A549 (cell line): ENCODE measurements at regions of chr2 and their contacts with region 1.

Region 1: DNA sequence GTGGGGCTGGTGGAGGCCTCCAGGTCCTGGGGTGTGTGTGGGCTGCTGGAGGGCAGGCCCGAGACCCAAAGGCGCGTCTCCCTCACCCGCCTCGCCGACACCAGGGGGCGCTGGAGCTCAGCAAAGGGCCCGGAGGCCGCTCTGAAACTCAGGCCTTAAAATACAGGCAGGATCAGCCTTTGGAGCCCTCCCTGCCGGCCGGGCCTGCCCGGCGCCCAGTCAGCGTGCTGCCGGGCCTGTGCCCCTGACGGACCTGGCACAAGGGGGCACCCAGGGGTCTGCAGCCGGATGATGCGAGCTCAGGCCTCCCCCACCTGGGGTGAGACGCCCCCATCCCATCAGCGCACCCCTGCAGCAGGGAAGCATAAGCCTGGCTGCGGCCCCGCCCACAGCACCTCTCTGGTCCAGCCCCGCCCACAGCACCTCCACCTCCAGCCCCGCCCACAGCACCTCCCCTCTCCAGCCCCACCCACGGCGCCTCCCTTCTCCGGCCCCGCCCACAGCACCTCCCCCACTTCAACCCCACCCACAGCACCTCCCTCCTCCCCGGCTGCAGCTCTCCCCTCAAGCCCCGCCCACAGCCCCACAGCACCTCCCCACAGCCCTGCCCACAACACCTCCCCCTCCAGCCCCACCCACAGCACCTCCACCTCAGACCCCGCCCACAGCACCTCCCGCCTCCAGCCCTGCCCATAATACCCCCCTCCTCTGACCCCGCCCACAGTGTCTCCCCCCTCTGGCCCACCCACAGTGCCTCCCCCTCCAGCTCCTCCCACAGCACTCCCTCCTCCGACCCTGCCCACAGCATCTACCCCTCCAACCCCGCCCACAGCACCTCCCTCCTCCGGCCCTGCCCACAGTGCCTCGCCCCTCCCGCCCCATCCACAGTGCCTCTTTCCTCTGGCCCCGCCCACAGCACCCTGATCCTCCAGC is 92.8 kb upstream of the OTOS start:
- DNase-seq: peak; percentile 90 to 95
- ATAC-seq: peak; percentile 80 to 90
- H3K4me3 ChIP-seq: peak overlapping the region; percentile 59
- H3K27ac ChIP-seq: peak overlapping the region; percentile 83 to 88
- H3K4me1 ChIP-seq: peaks cover 16% of the 10 kb centered on the region
- CTCF ChIP-seq: peak; percentile 88
- EP300 ChIP-seq: no peak
- POLR2A ChIP-seq: no peak
- RAD21 ChIP-seq: peak; percentile 94 to 98

Region 2: GRCh38 chr2:239889641-239890121 is 343.5 kb before region 1 on chr2:
- CTCF ChIA-PET with region 1: no interaction called
- POLR2A ChIA-PET with region 1: no interaction called
- DNase-seq: no peak
- ATAC-seq: no peak
- H3K4me3 ChIP-seq: no peak overlapping the region
- H3K27ac ChIP-seq: no peak overlapping the region
- H3K4me1 ChIP-seq: no peaks in the 10 kb centered on the region
- CTCF ChIP-seq: no peak
- EP300 ChIP-seq: no peak
- POLR2A ChIP-seq: no peak
- RAD21 ChIP-seq: no peak

Region 3: DNA sequence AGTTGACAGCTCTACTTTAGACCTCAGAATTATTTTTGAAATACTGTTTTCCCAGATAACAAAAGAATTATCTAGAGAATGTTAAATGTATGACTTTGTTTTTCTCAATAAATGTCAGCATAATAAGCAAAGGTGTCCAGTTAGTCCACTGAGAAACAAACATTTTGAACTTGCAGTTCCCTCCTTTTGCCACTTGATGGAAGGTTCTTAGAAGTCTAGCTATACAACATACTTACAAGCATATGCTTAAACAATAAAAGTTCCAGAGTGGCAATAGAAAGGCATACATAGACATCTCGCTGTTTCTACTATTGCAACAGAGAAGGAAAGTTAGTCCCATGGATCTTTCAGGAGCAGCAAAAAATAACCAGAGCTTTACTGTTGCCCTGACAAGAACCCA is 219.9 kb before region 1 on chr2:
- CTCF ChIA-PET with region 1: no interaction called
- POLR2A ChIA-PET with region 1: no interaction called
- DNase-seq: peak in 1 of 2 experiments; percentile 29
- ATAC-seq: peak; percentile 79 to 83
- H3K4me3 ChIP-seq: no peak overlapping the region
- H3K27ac ChIP-seq: no peak overlapping the region
- H3K4me1 ChIP-seq: no peaks in the 10 kb centered on the region
- CTCF ChIP-seq: no peak
- EP300 ChIP-seq: no peak
- POLR2A ChIP-seq: no peak
- RAD21 ChIP-seq: no peak

Region 4: GRCh38 chr2:240186191-240186725 is 47.0 kb before region 1 on chr2:
- CTCF ChIA-PET with region 1: no interaction called
- POLR2A ChIA-PET with region 1: no interaction called
- DNase-seq: no peak
- ATAC-seq: no peak
- H3K4me3 ChIP-seq: no peak overlapping the region
- H3K27ac ChIP-seq: no peak overlapping the region
- H3K4me1 ChIP-seq: no peaks in the 10 kb centered on the region
- CTCF ChIP-seq: no peak
- EP300 ChIP-seq: no peak
- POLR2A ChIP-seq: no peak
- RAD21 ChIP-seq: no peak

Region 5: DNA sequence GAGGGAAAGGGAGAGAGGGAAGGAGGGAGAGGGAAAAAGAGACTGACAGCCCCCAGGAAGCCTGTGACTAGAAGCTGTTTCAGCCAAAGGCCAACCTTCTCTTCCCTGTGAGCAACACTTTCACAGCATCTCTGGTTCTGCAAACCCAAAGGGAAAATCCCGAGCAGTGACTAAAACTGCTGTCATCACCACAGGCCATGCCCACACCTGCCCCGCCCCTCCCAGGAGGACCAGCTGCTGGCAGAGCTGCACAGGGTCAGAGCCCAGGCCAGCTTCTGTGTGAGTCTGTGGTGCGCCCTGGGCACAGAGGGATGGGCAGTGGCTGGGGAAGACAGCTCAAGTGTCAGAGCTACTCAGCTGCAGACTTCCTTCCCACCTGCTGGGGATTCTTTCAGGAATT is 27.9 kb before region 1 on chr2:
- CTCF ChIA-PET with region 1: interaction called, 13 read pairs
- POLR2A ChIA-PET with region 1: no interaction called
- DNase-seq: peak; percentile 45 to 46
- ATAC-seq: peak; percentile 78
- H3K4me3 ChIP-seq: no peak overlapping the region
- H3K27ac ChIP-seq: no peak overlapping the region
- H3K4me1 ChIP-seq: no peaks in the 10 kb centered on the region; the same call in 2 of the 3 replicates
- CTCF ChIP-seq: no peak
- EP300 ChIP-seq: no peak
- POLR2A ChIP-seq: no peak
- RAD21 ChIP-seq: no peak

Region 6: DNA sequence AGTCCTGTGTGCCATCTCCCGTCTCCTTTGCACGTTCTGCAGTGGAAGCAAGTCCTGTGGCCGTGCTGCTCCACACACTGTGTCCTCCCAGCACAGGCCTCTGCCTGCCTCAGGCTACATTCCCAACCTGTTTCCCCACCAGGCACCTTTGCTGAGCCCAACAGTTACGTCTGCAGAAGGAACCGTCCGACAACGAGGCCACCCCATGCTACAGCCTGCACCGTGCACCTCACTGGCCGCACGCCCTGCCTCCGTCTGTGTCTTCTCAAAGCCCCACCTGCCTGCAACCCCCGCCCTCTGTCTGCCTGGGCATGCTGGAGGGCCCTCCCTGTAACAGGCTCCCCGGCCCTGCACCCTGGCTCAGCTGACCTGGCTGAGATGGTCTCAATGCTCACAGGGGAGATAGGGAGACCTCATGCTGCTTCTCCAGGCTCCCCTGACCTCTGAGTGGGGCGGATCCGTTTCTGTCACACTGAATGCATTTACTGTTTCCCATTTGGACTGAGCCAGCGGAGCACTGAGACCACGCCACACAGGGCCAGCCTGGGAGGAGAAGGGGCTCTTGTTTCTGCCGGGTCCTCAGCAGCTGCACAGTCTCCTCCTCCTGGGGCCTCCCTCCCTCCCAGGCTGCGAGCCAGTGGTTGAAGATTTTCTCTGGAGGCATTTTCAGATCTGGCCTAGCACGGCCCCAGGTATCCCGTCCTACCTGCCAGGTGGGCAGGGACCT is 16.4 kb after region 1 on chr2:
- CTCF ChIA-PET with region 1: interaction called, 12 read pairs
- POLR2A ChIA-PET with region 1: no interaction called
- DNase-seq: no peak
- ATAC-seq: no peak
- H3K4me3 ChIP-seq: no peak overlapping the region
- H3K27ac ChIP-seq: peak overlapping the region; percentile 94 to 98; a peak in 4 of 6 replicates
- H3K4me1 ChIP-seq: peaks cover 25% of the 10 kb centered on the region
- CTCF ChIP-seq: no peak
- EP300 ChIP-seq: no peak
- POLR2A ChIP-seq: no peak
- RAD21 ChIP-seq: no peak

Region 7: DNA sequence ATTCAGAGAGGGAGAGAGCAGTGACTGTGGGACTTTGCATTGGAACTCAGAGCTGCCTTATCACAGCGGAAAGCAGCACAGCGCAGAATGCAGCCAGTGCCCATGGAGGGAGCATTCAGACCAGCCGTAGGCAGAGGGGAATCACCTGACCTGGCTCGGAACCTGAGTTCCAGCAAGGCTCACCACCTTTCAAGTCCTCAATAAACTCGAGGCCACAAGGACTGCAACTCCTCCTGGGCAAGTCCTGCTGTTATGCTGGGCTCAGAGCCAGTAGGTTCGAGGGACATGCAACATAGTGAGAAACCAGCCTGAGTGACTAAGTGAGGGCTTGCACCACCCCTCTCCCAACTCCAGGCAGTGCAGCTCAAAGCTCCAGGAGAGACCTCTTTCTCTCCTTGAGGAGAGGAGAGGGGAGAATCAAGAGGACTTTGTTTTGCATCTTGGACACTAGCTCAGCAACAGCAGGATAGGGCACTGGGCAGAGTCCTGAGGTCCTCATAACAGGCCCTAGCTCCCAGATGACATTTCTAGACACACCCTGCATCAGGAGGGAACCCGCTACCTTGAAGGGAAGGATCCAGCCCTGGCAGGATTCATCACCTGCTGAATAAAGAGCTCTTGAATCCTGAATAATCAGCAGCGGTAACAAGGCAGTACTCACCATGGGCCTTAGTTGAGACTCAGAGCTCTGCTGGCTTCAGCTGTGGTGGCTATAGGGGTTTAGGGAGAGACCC is 44.0 kb after region 1 on chr2:
- CTCF ChIA-PET with region 1: interaction called, 10 read pairs
- POLR2A ChIA-PET with region 1: no interaction called
- DNase-seq: no peak
- ATAC-seq: no peak; a peak in 1 of 6 replicates
- H3K4me3 ChIP-seq: no peak overlapping the region
- H3K27ac ChIP-seq: no peak overlapping the region
- H3K4me1 ChIP-seq: peaks cover 5% of the 10 kb centered on the region; the same call in 1 of the 3 replicates
- CTCF ChIP-seq: no peak
- EP300 ChIP-seq: no peak
- POLR2A ChIP-seq: no peak
- RAD21 ChIP-seq: no peak

Region 8: DNA sequence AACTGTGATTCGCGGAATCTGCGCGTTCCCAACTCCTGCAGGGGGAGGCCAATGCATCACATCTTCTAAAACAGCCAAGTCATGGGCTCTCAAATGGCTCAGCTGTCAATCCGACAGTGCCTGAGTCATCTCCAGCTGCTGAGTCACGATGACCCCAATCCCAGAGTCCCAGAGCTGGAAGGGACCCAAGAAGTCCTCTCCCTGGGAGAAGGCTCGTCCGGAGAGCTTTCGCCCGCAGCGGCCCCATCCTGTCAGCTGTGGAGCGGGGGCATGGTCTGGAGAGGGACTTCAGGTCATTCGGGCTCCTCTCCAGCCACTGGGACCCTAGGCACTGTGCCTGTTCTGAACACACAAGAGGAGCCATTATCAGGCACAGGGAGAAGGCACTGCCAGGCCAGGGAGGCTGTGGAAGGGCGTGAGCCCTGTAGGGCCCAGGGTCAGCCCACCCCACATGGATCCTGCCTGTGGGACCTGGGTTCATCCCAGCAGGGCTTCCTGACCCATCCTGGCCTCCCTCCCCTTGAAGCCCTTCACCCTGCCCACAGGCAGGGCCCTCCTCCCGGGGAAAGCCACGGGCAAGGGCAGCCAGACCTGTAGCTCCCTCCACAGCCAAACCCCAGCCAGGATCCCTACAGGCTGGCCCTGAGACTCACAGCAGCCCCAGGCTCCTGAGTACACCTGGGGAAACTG is 154.6 kb after region 1 on chr2:
- CTCF ChIA-PET with region 1: interaction called, 30 read pairs
- POLR2A ChIA-PET with region 1: no interaction called
- DNase-seq: peak; percentile 90 to 96
- ATAC-seq: peak; percentile 70 to 81
- H3K4me3 ChIP-seq: peak overlapping the region; percentile 39
- H3K27ac ChIP-seq: peak overlapping the region; percentile 99 to 100
- H3K4me1 ChIP-seq: peaks cover 45% of the 10 kb centered on the region
- CTCF ChIP-seq: no peak
- EP300 ChIP-seq: peak; percentile 62 to 77; a peak in 3 of 5 replicates
- POLR2A ChIP-seq: no peak
- RAD21 ChIP-seq: peak in 1 of 2 experiments; percentile 31; a peak in 2 of 5 replicates

Region 9: DNA sequence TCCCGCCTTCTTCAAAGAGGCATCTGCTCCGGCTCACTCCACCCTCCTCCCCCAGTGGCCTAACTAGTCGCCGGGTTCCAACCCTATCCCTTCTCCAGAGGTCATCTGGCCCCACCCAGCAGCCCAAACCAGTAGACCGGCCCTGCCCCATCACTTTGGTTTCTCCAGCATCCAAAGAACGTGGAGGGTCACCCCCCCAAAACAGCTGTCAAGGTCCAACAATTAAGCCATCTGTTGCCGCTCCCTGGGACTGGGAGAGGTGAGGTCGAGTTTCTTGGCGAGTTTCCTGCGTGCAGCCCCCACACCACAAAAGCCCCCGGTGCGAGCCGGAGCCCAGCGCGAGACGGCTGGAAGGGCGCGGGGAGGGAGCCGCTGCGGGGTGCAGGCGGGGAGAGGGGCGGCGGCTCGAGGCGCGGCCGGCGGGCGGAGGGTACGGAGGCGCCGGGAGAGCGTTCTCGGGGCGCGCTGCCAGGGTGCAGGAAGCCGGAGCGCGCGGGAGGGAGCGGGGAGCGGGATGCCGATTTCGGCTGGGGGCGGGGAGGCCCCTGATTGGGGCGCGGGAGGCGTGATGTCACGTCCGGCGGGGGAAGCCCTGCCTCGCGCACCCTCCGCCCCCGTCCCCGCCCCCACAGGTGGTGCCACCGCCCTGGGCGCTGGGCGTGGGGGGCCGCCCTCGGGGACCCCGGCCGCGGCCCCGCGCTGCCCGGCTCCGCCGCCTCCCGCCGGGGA is 201.7 kb after region 1 on chr2:
- CTCF ChIA-PET with region 1: interaction called, 116 read pairs
- POLR2A ChIA-PET with region 1: interaction called, 9 read pairs
- DNase-seq: peak; percentile 90 to 91
- ATAC-seq: peak; percentile 39 to 51
- H3K4me3 ChIP-seq: peak overlapping the region; percentile 90
- H3K27ac ChIP-seq: peak overlapping the region; percentile 97 to 99
- H3K4me1 ChIP-seq: peaks cover 48% of the 10 kb centered on the region
- CTCF ChIP-seq: no peak
- EP300 ChIP-seq: peak in 1 of 2 experiments; percentile 31; a peak in 1 of 5 replicates
- POLR2A ChIP-seq: peak; percentile 60
- RAD21 ChIP-seq: 0 out of 5 replicates have a peak, but pooled peaks of 1 of the 2 experiments have one; percentile 11

Region 10: GRCh38 chr2:240455351-240456305 is 222.4 kb after region 1 on chr2:
- CTCF ChIA-PET with region 1: interaction called, 26 read pairs
- POLR2A ChIA-PET with region 1: no interaction called
- DNase-seq: no peak
- ATAC-seq: no peak
- H3K4me3 ChIP-seq: no peak overlapping the region
- H3K27ac ChIP-seq: peak overlapping the region in 1 of 2 experiments; percentile 54; a peak in 3 of 6 replicates
- H3K4me1 ChIP-seq: peaks cover 59% of the 10 kb centered on the region
- CTCF ChIP-seq: no peak
- EP300 ChIP-seq: no peak
- POLR2A ChIP-seq: no peak
- RAD21 ChIP-seq: no peak